Transverse colon (tissue), 4 donors: ENCODE measurements at regions of chr5 and their contacts with region 1.

Region 1: DNA sequence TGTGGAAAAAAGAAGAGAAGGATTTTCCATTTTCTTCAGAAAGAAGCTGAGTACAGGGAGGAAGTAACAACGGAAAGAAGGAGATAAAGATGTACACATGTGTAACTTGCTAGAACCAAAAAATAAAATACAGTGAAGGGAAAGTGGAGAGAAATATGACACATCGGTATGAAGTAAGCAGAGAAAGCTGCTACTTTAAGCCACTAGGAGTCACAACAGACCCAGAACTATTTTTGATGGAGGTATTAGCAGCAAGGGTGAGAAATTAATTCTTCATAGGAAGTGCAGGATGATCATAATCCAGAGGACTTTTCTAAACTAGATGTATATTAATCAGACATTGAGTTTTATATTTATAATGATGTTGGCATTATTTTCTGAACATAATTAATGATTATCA is 88.5 kb downstream of the FAM174A start:
- DNase-seq: no peak
- H3K4me3 ChIP-seq: no peak overlapping the region
- H3K27ac ChIP-seq: no peak overlapping the region
- H3K4me1 ChIP-seq: no peaks in the 10 kb centered on the region
- H3K27me3 ChIP-seq: no peaks in the 10 kb centered on the region
- CTCF ChIP-seq: peak; percentile 13 to 36 (median 32)
- EP300 ChIP-seq: no peak
- POLR2A ChIP-seq: no peak

Region 2: GRCh38 chr5:100852988-100853449 is 229.3 kb after region 1 on chr5:
- in situ Hi-C with region 1: no loop called
- intact Hi-C with region 1: no loop called
- DNase-seq: no peak
- H3K4me3 ChIP-seq: no peak overlapping the region
- H3K27ac ChIP-seq: peak overlapping the region; percentile 16 to 41 (median 29)
- H3K4me1 ChIP-seq: peaks cover 0 to 5% (median 0%) of the 10 kb centered on the region in 4 donors
- H3K27me3 ChIP-seq: no peaks in the 10 kb centered on the region
- CTCF ChIP-seq: no peak
- EP300 ChIP-seq: no peak
- POLR2A ChIP-seq: no peak

Region 3: DNA sequence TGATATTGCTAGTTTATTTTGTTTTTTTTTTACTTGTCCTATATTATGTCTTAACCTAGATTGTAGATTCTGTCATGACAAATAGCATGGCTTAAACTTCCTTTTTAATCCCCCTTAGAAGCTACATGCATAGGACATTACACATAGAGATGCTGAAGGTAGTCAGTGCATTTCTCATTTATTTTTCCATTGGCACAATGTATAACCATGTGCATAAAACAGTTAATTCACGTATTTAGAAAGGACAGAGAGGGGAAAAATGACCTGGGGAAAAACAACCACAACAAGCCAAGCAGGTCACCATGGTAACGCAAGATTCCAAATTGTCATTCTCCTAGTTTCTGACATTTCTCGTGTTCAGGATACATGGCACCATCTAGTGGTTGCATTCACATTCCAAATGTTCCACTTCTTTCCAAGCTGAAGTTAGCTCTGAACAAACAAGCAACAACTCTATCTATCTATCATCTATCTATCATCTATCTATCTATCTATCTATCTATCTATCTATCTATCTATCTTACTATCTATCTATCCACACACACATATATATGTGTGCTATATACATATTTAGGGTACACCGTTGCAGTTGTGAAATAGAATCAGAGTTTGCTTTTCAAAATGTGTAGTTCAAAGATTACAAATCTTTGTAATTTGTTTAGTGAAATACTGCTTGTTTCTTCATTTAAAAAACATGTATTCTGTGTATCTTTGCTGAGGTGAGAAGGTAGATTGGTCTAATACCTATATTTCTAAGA is 766.6 kb after region 1 on chr5:
- in situ Hi-C with region 1: loop called in 1 of 4 experiments (anchors 25 kb)
- intact Hi-C with region 1: no loop called
- DNase-seq: no peak
- H3K4me3 ChIP-seq: no peak overlapping the region
- H3K27ac ChIP-seq: no peak overlapping the region
- H3K4me1 ChIP-seq: no peaks in the 10 kb centered on the region
- H3K27me3 ChIP-seq: no peaks in the 10 kb centered on the region
- CTCF ChIP-seq: peak; percentile 25 to 51 (median 46)
- EP300 ChIP-seq: no peak
- POLR2A ChIP-seq: no peak